A549 (cell line): ENCODE measurements at regions of chr19 and their contacts with region 1.

Region 1: GRCh38 chr19:8412783-8413628 is at the start of gene MARCHF2:
- DNase-seq: peak; percentile 66 to 96
- ATAC-seq: peak; percentile 99
- H3K4me3 ChIP-seq: peak within 1 kb of the TSS; percentile 92
- H3K27ac ChIP-seq: peak within 1 kb of the TSS; percentile 89 to 91
- H3K4me1 ChIP-seq: peaks cover 4% of the 10 kb centered on the region; the same call in 1 of the 3 replicates
- CTCF ChIP-seq: peak; percentile 60
- EP300 ChIP-seq: no peak
- POLR2A ChIP-seq: peak; percentile 30; the same call in 1 of the 2 replicates
- RAD21 ChIP-seq: peak; percentile 53 to 66
- polyA plus RNA-seq, gene MARCHF2: 12.4 and 12.8 TPM in 2 replicates

Region 2: DNA sequence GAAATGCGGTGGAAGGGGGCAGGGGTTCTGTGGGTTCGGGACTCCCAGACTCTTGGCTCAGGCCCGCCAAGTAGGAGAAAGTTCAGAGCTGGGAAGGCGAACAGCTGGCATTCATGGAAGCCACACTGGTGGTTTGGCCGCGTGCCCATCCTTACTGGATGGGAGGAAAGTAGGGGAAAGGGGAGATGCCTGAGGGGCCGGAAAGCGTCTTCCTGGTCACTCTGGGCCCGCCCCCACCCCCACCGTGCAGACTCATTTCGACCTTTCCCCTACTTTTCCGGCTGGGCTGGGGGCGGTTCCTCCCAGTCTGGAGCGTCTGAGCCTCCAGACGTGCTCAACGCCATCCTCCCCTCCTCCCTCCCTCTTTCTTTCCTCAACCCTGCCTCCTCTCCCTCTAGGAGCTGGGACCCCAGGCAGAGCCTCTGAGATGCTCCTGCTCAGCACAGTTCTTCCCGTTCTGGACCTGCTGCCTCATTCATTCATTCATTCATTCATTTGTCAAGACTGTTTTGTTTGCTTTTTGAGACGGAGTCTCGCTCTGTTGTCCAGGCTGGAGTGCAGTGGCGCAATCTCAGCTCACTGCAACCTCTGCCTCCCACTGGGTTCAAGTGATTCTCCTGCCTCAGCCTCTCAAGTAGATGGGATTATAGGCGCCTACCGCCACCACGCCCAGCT is 45.5 kb before region 1 on chr19:
- CTCF ChIA-PET with region 1: no interaction called
- POLR2A ChIA-PET with region 1: no interaction called
- DNase-seq: peak in 1 of 2 experiments; percentile 79
- ATAC-seq: peak in 1 of 2 experiments; percentile 18; a peak in 3 of 6 replicates
- H3K4me3 ChIP-seq: peak overlapping the region; percentile 25; the same call in 1 of the 3 replicates
- H3K27ac ChIP-seq: peak overlapping the region; percentile 51 to 79; a peak in 5 of 6 replicates
- H3K4me1 ChIP-seq: peaks cover 43% of the 10 kb centered on the region
- CTCF ChIP-seq: no peak
- EP300 ChIP-seq: no peak
- POLR2A ChIP-seq: no peak
- RAD21 ChIP-seq: no peak

Region 3: GRCh38 chr19:8423817-8424223 is 10.8 kb after region 1 on chr19:
- CTCF ChIA-PET with region 1: interaction called, 19 read pairs
- POLR2A ChIA-PET with region 1: interaction called, 35 read pairs
- DNase-seq: peak; percentile 67 to 93
- ATAC-seq: peak; percentile 96 to 99
- H3K4me3 ChIP-seq: no peak overlapping the region
- H3K27ac ChIP-seq: peak overlapping the region; percentile 82 to 91
- H3K4me1 ChIP-seq: peaks cover 17% of the 10 kb centered on the region
- CTCF ChIP-seq: no peak
- EP300 ChIP-seq: no peak
- POLR2A ChIP-seq: no peak
- RAD21 ChIP-seq: no peak

Region 4: DNA sequence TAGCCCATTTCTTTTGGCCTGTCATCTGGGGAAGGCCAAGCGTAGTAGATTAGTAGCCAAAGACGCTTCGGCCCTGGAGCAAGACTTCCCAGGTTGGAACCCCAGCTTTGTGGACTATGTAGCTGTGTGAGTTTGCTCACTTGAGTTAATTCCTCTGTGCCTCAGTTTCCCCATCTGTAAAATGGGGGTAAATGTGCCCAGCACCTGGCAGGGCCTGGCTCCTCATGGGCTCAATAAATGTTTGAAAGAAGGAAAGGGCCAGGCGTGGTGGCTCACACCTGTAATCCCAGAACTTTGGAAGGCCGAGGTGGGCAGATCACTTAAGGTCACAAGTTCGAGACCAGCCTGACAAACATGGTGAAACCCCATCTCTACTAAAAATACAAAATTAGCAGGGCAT is 16.8 kb after region 1 on chr19:
- CTCF ChIA-PET with region 1: interaction called, 5 read pairs
- POLR2A ChIA-PET with region 1: interaction called, 10 read pairs
- DNase-seq: no peak
- ATAC-seq: no peak
- H3K4me3 ChIP-seq: no peak overlapping the region
- H3K27ac ChIP-seq: no peak overlapping the region
- H3K4me1 ChIP-seq: peaks cover 11% of the 10 kb centered on the region
- CTCF ChIP-seq: no peak
- EP300 ChIP-seq: no peak
- POLR2A ChIP-seq: no peak
- RAD21 ChIP-seq: no peak

Region 5: DNA sequence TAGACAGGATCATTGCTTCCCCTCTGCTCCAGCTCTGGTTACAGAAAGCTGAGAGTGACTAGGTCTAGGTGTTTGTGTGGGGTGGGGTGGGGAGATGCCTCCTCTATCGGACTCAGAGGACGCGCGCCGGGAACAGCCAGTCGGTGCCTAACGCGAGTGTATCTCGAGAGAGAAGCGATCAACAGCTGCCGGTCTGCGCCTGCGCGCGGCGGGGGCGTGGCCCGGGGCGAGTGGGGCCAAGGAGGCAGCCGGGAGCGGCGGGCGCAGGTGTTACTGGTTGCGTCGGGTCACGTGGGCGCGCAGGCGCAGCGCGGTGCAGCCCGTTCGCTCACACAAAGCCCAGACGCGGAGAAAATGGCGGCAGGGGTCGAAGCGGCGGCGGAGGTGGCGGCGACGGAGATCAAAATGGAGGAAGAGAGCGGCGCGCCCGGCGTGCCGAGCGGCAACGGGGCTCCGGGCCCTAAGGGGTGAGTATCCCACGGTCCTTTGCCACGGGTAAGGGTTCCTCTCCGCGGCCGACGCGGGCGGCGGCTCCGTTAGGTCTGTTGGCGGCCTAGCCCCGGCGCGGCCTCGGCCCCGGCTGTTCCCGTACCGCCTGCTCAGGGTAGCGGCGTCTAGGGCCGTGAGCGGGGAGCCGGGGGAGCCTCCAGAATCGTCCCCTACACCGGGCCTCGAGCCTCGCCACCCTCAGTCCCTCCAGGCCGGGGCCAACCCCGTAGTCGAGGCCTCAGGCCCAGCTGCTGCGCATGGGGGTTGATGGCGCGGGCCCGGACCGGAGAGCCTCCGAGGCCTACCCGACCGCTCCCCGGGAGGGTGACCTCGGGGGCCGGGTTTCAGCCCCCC is 31.9 kb after region 1 on chr19 and contains the start of gene HNRNPM:
- CTCF ChIA-PET with region 1: interaction called, 4 read pairs
- POLR2A ChIA-PET with region 1: interaction called, 16 read pairs
- DNase-seq: peak; percentile 75 to 96
- ATAC-seq: peak; percentile 95
- H3K4me3 ChIP-seq: peak within 1 kb of the TSS; percentile 82
- H3K27ac ChIP-seq: peak within 1 kb of the TSS; percentile 90 to 99
- H3K4me1 ChIP-seq: peaks cover 32% of the 10 kb centered on the region
- CTCF ChIP-seq: no peak
- EP300 ChIP-seq: no peak
- POLR2A ChIP-seq: peak; percentile 64
- RAD21 ChIP-seq: no peak
- polyA plus RNA-seq, gene HNRNPM: 94.1 and 168 TPM in 2 replicates

Region 6: DNA sequence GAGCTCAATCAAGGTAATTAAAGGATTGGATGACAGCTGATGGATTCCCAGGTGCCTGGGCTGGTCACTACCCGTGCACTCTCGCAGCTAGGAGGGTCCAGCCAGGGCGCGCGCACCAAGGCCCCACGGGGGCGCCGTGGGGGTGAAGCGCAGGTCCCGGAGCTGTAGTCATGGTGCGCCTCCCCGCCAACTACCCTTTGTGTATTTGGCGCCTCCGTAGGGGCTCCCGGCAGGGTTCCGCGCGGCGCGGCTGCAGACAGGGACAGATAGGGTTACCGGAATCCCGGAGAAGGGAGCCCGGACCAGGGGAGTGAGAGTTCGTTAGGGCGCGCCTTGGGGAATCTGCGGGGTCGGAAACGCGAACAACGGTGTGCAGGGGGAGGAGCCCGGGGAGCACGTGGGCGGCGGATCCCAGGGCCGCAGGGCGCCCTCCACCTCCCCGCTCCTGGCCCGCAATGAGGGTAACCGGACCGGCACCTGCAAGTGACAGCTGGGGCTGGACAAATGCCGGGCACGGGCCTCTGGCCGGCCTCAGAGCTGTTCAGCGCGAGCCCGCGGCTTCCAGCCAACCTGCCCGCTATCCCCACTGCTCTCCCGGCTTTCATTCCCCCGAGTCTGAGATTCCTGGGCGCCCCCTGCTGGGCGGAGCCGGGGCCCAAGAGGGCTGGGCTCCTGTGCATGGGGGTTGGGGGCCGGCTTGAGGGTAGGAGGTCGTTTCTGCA is 92.8 kb after region 1 on chr19:
- CTCF ChIA-PET with region 1: interaction called, 14 read pairs
- POLR2A ChIA-PET with region 1: interaction called, 4 read pairs
- DNase-seq: peak; percentile 71 to 81
- ATAC-seq: peak; percentile 86 to 91
- H3K4me3 ChIP-seq: peak overlapping the region; percentile 61
- H3K27ac ChIP-seq: peak overlapping the region; percentile 87 to 99
- H3K4me1 ChIP-seq: peaks cover 10% of the 10 kb centered on the region; the same call in 2 of the 3 replicates
- CTCF ChIP-seq: peak; percentile 73
- EP300 ChIP-seq: no peak
- POLR2A ChIP-seq: no peak
- RAD21 ChIP-seq: peak; percentile 69 to 76

Region 7: DNA sequence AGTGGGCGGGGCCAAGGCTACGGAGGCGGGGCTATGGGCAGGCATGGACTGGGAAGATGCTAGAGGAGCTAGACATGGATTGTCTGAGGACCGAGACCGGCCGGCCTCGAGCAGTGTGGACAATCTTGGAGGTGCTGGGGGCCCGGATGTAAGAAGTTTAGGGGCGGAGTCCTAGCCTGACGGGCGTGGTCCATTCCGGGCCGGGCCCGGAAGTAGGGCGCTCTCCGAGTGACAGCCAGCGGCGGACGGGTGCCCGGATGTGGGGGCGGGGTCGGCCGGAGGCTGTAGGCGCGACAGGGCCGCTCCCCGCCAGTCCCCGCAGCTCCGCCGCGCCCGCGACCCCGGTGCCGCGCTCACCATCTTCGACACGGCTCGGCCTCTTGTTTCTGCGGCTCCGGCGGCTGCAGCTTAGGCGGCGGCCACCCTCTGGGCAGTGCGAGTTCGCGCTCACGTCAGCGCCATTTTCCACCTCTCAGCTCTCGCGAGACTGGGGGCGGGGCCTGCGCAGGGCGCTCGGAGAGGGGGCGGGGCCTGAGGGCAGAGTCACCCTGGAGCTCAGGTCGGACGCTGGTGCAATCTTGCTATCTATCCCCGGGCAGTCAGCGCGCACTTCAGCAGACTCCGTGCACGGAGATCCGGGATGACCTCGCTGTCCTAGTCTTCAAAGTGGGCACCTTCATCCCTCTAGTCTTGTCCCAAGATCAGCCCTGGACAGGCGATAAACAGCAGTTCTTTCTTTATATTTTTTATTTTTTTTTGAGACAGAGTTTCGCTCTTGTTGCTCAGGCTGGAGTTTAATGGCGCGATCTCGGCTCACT is 100.9 kb after region 1 on chr19 and contains the start of gene ZNF414:
- CTCF ChIA-PET with region 1: no interaction called
- POLR2A ChIA-PET with region 1: interaction called, 11 read pairs
- DNase-seq: peak; percentile 92 to 97
- ATAC-seq: peak; percentile 95
- H3K4me3 ChIP-seq: peak within 1 kb of the TSS; percentile 51
- H3K27ac ChIP-seq: peak within 1 kb of the TSS; percentile 94 to 99
- H3K4me1 ChIP-seq: peaks cover 18% of the 10 kb centered on the region
- CTCF ChIP-seq: no peak
- EP300 ChIP-seq: no peak
- POLR2A ChIP-seq: peak; percentile 92
- RAD21 ChIP-seq: no peak
- polyA plus RNA-seq, gene ZNF414: 2.8 and 3.3 TPM in 2 replicates